Dorsolateral prefrontal cortex (tissue), 120 donors: ENCODE measurements at regions of chr16 and their contacts with region 1.

Region 1: GRCh38 chr16:77424871-77425604 is 9.8 kb downstream of the ADAMTS18 start:
- DNase-seq: no peak
- H3K4me3 ChIP-seq: peak overlapping the region in 2 of 59 donors; percentile 5 to 12
- H3K27ac ChIP-seq: peak overlapping the region in 17 of 59 donors; percentile 7 to 64 (median 34)
- H3K27me3 ChIP-seq: peaks cover 0 to 65% (median 18%) of the 10 kb centered on the region in 45 donors
- CTCF ChIP-seq: no peak

Region 2: DNA sequence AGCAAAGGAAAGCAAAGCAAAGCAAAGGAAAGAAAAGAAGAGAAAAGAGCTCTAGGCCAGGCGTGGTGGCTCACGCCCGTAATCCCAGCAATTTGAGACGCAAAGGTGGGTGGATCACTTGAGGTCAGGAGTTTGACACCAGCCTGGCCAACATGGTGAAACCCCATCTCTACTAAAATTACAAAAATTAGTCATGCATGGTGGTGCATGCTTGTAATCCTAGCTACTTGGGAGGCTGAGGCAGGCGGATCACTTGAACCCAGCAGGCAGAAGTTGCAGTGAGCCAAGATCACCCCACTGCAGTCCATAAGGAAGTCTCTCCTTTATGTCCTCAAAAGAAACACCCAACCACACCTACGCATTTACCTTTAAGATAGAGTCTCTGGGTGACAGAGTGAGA is 60.3 kb before region 1 on chr16:
- intact Hi-C with region 1: loop called in 1 of 2 experiments (anchors 5 kb)
- DNase-seq: no peak
- H3K4me3 ChIP-seq: no peak overlapping the region
- H3K27ac ChIP-seq: no peak overlapping the region
- H3K27me3 ChIP-seq: no peaks in the 10 kb centered on the region
- CTCF ChIP-seq: no peak